GM12878 (cell line): ENCODE measurements at regions of chr14 and their contacts with region 1.

Region 1: DNA sequence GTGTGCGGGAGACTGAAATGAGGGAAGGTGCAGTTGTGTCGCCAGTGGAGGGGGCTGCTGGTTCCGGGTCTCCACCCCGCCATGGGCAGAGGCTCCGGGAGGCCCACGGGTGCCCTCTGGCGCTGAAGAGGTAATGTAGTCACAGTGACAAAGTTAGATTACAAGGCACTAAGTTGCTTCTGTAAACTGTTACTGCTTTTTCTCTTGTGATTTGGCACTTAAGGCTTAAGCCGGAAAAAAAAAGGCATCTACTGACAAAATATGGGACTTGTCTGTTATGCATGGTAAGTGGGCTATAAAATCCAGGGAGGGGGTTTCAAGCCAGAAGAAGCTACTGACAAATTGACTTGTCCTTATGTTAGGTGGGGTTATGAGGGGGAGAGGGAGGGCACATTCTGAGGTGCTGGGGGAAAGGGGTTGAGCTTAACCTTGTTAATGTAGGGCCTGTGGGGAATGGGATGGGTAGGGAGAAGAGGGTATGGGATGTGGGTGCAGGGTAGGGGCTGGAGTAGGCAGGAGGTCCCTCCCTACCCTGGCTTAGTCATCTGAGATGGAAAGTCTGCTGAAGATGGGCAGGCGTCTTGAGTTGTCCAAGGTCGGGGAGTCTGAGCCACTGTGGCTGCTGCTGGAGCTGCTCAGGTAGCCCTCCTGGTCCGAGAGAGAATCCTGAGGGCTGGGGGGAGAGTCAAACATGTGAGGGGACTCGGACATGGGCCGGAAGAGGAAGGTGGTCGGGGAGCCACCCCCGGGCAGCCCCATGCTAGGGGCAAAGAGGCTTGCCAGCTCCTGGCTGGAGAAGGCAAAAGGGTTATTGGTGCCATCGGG is 3.7 kb downstream of the ZFP36L1 start:
- DNase-seq: no peak
- ATAC-seq: peak; percentile 39
- H3K4me3 ChIP-seq: peak overlapping the region; percentile 97
- H3K27ac ChIP-seq: peak overlapping the region; percentile 100
- H3K4me1 ChIP-seq: peaks cover 32% of the 10 kb centered on the region
- H3K27me3 ChIP-seq: no peaks in the 10 kb centered on the region
- CTCF ChIP-seq: peak; percentile 76 to 93 (median 85); a peak in 5 of 6 replicates
- EP300 ChIP-seq: no peak
- POLR2A ChIP-seq: peak; percentile 77
- RAD21 ChIP-seq: peak; percentile 80

Region 2: GRCh38 chr14:68408680-68409079 is 380.5 kb before region 1 on chr14:
- CTCF ChIA-PET with region 1: interaction called, 16 read pairs
- POLR2A ChIA-PET with region 1: interaction called, 23 read pairs
- RAD21 ChIA-PET with region 1: interaction called, 154 read pairs
- SMC1A ChIA-PET with region 1: interaction called, 79 read pairs
- in situ Hi-C with region 1: loop called (anchors 5 kb)
- intact Hi-C with region 1: loop called (anchors 2 kb)
- DNase-seq: no peak
- ATAC-seq: peak; percentile 42
- H3K4me3 ChIP-seq: no peak overlapping the region
- H3K27ac ChIP-seq: no peak overlapping the region
- H3K4me1 ChIP-seq: peaks cover 39% of the 10 kb centered on the region
- H3K27me3 ChIP-seq: no peaks in the 10 kb centered on the region
- CTCF ChIP-seq: peak; percentile 25 to 54 (median 33); a peak in 5 of 6 replicates
- EP300 ChIP-seq: no peak
- POLR2A ChIP-seq: no peak
- RAD21 ChIP-seq: peak; percentile 67

Region 3: GRCh38 chr14:68663385-68664076 is 125.7 kb before region 1 on chr14:
- CTCF ChIA-PET with region 1: interaction called, 19 read pairs
- POLR2A ChIA-PET with region 1: interaction called, 4 read pairs
- RAD21 ChIA-PET with region 1: interaction called, 17 read pairs
- SMC1A ChIA-PET with region 1: interaction called, 23 read pairs
- in situ Hi-C with region 1: no loop called
- intact Hi-C with region 1: loop called (anchors 2 kb)
- DNase-seq: peak; percentile 77
- ATAC-seq: peak; percentile 93
- H3K4me3 ChIP-seq: peak overlapping the region; percentile 39; the same call in 1 of the 2 replicates
- H3K27ac ChIP-seq: peak overlapping the region; percentile 66
- H3K4me1 ChIP-seq: peaks cover 22% of the 10 kb centered on the region
- H3K27me3 ChIP-seq: no peaks in the 10 kb centered on the region
- CTCF ChIP-seq: no peak
- EP300 ChIP-seq: peak; percentile 89 to 98
- POLR2A ChIP-seq: no peak
- RAD21 ChIP-seq: peak; percentile 25; the same call in 1 of the 2 replicates

Region 4: GRCh38 chr14:68734231-68734775 is 54.9 kb before region 1 on chr14:
- CTCF ChIA-PET with region 1: interaction called, 4 read pairs
- POLR2A ChIA-PET with region 1: no interaction called
- RAD21 ChIA-PET with region 1: interaction called, 12 read pairs
- SMC1A ChIA-PET with region 1: interaction called, 5 read pairs
- in situ Hi-C with region 1: no loop called
- intact Hi-C with region 1: loop called (anchors 5 kb)
- DNase-seq: peak; percentile 48
- ATAC-seq: peak; percentile 43
- H3K4me3 ChIP-seq: no peak overlapping the region
- H3K27ac ChIP-seq: no peak overlapping the region
- H3K4me1 ChIP-seq: peaks cover 15% of the 10 kb centered on the region
- H3K27me3 ChIP-seq: no peaks in the 10 kb centered on the region
- CTCF ChIP-seq: no peak
- EP300 ChIP-seq: no peak
- POLR2A ChIP-seq: no peak
- RAD21 ChIP-seq: no peak

Region 5: DNA sequence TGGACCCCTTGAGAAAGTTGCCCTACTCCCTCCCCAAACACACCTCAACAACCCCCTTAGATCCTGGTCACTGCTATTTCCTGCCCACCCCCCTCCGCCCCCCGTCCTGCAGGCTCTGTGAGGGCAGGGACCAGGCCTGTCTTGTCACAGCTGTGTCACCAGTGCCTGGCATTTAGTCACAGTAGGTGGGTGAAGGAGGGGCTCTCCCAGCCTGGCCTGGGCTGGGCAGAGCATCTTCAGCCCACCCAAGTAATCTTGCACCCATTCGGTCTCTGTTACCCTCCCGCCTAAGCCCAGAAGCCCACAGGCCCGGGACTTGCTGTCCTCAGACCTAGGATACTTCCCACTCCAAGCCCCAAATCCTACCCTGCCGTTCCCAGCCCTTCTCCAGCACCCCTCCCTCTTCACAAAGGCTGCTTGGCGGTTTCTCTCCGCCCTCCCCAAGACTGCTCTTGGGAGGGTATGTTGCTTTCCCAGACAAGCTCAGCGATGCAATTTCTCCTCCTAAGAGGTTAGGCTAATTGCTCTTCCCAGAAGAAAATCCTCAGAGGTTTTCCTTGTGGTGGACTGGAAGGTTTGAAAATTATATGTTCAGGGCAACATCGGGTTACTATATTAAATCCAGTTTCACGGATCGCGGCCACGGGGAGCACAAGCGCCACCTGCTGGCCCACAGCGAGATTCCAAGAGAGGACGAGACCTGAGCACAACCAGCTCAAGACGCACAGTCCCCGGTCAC is 54.4 kb after region 1 on chr14:
- CTCF ChIA-PET with region 1: interaction called, 15 read pairs
- POLR2A ChIA-PET with region 1: no interaction called
- RAD21 ChIA-PET with region 1: interaction called, 6 read pairs
- SMC1A ChIA-PET with region 1: interaction called, 6 read pairs
- in situ Hi-C with region 1: no loop called
- intact Hi-C with region 1: no loop called
- DNase-seq: no peak
- ATAC-seq: peak; percentile 91
- H3K4me3 ChIP-seq: peak overlapping the region; percentile 25; the same call in 1 of the 2 replicates
- H3K27ac ChIP-seq: no peak overlapping the region
- H3K4me1 ChIP-seq: peaks cover 10% of the 10 kb centered on the region; the same call in 1 of the 2 replicates
- H3K27me3 ChIP-seq: no peaks in the 10 kb centered on the region
- CTCF ChIP-seq: peak; percentile 90 to 91 (median 90)
- EP300 ChIP-seq: no peak
- POLR2A ChIP-seq: no peak
- RAD21 ChIP-seq: peak; percentile 74